ENCODE measurements at regions of chr7 and their contacts with region 1.

Region 1: GRCh38 chr7:28711114-28711513 is 247.0 kb downstream of the TRIL start:
- DNase-seq: no peak
- H3K4me3 ChIP-seq: no peak overlapping the region
- CTCF ChIP-seq: no peak
- POLR2A ChIP-seq: no peak

Region 2: GRCh38 chr7:27124096-27124901 is 1586.8 kb before region 1 on chr7:
- intact Hi-C with region 1: loop called (anchors 5 kb)
- DNase-seq: peak in 1 of 2 donors; percentile 54
- H3K4me3 ChIP-seq: no peak overlapping the region
- CTCF ChIP-seq: no peak
- POLR2A ChIP-seq: no peak

Region 3: DNA sequence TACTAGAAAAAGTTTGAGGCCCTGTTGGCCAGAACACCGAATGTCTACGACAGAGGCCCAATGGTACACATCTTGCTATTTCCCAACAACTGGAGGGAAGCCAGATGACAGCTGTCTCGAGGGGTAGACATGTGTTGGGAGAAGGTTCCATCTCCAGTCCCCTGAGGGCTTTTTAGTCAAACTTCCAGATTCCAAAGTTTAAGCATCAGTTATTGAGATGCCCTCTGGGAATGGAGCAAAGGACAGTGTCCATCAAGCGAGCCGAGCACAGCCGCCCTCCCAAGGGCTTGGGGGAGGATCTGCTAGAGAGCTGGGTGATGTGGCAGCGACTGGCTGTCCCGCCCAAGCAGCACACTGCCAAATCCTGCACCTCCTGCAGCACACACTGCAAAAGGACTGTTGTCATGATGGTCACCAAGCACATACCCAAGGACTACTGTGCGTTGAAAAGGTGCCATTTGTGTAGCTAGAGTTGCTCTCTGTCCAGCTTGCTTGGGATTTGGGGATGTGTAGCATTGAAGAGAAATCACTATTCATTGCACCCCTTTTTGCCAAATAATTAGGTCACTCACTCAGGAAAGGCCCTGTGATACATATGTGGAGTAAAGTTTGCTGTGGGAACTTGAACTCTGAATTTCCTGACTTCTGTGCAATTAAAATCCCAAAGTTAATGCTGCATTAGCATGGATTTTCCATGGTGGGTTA is 82.4 kb after region 1 on chr7:
- intact Hi-C with region 1: no loop called
- DNase-seq: no peak
- H3K4me3 ChIP-seq: no peak overlapping the region
- CTCF ChIP-seq: no peak
- POLR2A ChIP-seq: no peak